Naive thymus-derived CD4-positive, alpha-beta T cell (primary cell): ENCODE measurements at regions of chr17 and their contacts with region 1.

Region 1: DNA sequence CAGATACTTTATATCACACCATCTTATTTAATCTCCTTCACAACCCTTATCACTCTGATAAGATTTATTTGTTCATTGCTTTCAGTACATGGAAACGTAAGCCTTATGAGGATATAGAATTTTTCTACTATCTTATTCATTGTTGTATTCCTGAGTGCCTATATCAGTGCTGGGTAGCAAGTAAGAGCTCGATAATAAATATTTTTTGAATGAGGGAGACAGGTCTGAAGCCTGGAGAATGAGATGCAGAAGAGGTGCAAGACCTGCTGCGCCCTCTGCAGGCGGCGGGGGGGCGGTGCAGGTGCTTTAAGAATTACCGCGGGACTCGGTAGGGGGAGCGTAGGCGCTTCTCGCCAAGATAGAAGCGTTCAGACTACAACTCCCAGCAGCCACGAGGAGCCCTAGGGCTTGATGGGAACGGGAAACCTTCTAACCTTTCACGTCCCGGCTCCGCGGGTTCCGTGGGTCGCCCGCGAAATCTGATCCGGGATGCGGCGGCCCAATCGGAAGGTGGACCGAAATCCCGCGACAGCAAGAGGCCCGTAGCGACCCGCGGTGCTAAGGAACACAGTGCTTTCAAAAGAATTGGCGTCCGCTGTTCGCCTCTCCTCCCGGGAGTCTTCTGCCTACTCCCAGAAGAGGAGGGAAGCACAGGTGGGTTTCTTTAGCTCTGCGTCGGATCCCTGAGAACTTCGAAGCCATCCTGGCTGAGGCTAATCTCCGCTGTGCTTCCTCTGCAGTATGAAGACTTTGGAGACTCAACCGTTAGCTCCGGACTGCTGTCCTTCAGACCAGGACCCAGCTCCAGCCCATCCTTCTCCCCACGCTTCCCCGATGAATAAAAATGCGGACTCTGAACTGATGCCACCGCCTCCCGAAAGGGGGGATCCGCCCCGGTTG is at the start of gene WRAP53:
- DNase-seq: peak; percentile 93 to 97 (median 96)
- ATAC-seq: peak; percentile 89
- H3K4me3 ChIP-seq: peak within 1 kb of the TSS; percentile 96
- H3K4me3 Mint-ChIP-seq: peak within 1 kb of the TSS; percentile 95 to 99 (median 97)
- H3K27ac ChIP-seq: peak within 1 kb of the TSS; percentile 96
- H3K27ac Mint-ChIP-seq: peak within 1 kb of the TSS; percentile 99 to 100 (median 100)
- H3K4me1 ChIP-seq: peaks cover 28 to 31% of the 10 kb centered on the region in 2 donors
- H3K4me1 Mint-ChIP-seq: peaks cover 31 to 47% (median 41%) of the 10 kb centered on the region in 7 donors
- H3K27me3 ChIP-seq: no peaks in the 10 kb centered on the region
- H3K27me3 Mint-ChIP-seq: no peaks in the 10 kb centered on the region
- total RNA-seq, gene WRAP53: 6.7 to 21.1 (median 9.6) TPM

Region 2: DNA sequence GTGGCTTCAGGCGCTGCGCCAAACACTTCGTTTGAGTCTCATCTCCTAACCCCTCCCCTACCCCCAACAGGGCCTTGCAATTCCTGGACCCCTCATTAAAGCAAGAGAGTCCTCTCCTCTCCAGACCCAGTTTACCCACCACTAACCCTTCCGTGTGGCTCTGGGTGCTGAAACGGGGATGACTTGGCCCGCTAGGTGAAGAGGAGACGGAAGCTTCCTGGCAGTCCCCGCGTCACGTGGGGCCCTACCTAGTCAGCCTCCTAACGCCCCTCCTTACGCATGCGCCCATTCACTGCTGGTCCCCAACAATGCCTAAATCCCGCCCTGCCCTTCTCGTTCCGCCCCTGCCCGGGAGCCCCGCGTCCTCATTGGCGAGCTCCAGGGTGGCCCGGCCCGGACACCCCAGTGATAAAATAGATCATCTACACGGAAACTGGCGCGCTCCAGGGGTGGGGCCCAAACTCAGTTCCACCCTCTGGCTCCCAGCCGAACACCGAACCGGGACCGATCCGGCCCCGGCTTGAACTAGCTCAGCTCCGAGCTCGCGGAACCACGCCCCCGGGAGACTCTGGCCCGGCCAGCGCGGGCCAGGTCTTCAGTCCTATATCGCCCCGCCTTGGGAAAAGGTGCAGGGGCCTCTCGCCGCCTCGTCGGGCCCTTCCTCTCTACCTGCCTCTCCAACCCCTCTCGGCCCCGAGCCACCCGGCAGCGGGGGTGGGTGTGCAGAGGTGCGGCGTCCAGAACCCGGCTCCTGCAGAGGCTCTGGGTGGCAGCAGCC is 652.4 kb before region 1 on chr17 and contains the start of gene SLC16A13:
- CTCF ChIA-PET with region 1: no interaction called
- POLR2A ChIA-PET with region 1: interaction called, 8 read pairs
- intact Hi-C with region 1: loop called in 1 of 2 experiments (anchors 5 kb)
- DNase-seq: peak; percentile 87 to 99 (median 97)
- ATAC-seq: peak; percentile 95
- H3K4me3 ChIP-seq: peak within 1 kb of the TSS; percentile 67
- H3K4me3 Mint-ChIP-seq: peak within 1 kb of the TSS; percentile 89 to 95 (median 93)
- H3K27ac ChIP-seq: peak within 1 kb of the TSS; percentile 94
- H3K27ac Mint-ChIP-seq: peak within 1 kb of the TSS; percentile 96 to 99 (median 98)
- H3K4me1 ChIP-seq: peaks cover 26 to 36% of the 10 kb centered on the region in 2 donors
- H3K4me1 Mint-ChIP-seq: peaks cover 39 to 80% (median 58%) of the 10 kb centered on the region in 7 donors
- H3K27me3 ChIP-seq: no peaks in the 10 kb centered on the region
- H3K27me3 Mint-ChIP-seq: no peaks in the 10 kb centered on the region
- total RNA-seq, gene SLC16A13: 3.4 to 20.9 (median 15.0) TPM

Region 3: GRCh38 chr17:7329374-7329996 is 358.7 kb before region 1 on chr17:
- CTCF ChIA-PET with region 1: no interaction called
- POLR2A ChIA-PET with region 1: interaction called, 6 read pairs
- intact Hi-C with region 1: loop called in 1 of 2 experiments (anchors 5 kb)
- DNase-seq: peak; percentile 84 to 98 (median 98)
- ATAC-seq: peak; percentile 91
- H3K4me3 ChIP-seq: peak overlapping the region; percentile 95
- H3K4me3 Mint-ChIP-seq: peak overlapping the region; percentile 89 to 100 (median 96)
- H3K27ac ChIP-seq: peak overlapping the region; percentile 88
- H3K27ac Mint-ChIP-seq: peak overlapping the region; percentile 93 to 99 (median 97)
- H3K4me1 ChIP-seq: peaks cover 15 to 36% of the 10 kb centered on the region in 2 donors
- H3K4me1 Mint-ChIP-seq: peaks cover 29 to 61% (median 44%) of the 10 kb centered on the region in 7 donors
- H3K27me3 ChIP-seq: no peaks in the 10 kb centered on the region
- H3K27me3 Mint-ChIP-seq: no peaks in the 10 kb centered on the region

Region 4: DNA sequence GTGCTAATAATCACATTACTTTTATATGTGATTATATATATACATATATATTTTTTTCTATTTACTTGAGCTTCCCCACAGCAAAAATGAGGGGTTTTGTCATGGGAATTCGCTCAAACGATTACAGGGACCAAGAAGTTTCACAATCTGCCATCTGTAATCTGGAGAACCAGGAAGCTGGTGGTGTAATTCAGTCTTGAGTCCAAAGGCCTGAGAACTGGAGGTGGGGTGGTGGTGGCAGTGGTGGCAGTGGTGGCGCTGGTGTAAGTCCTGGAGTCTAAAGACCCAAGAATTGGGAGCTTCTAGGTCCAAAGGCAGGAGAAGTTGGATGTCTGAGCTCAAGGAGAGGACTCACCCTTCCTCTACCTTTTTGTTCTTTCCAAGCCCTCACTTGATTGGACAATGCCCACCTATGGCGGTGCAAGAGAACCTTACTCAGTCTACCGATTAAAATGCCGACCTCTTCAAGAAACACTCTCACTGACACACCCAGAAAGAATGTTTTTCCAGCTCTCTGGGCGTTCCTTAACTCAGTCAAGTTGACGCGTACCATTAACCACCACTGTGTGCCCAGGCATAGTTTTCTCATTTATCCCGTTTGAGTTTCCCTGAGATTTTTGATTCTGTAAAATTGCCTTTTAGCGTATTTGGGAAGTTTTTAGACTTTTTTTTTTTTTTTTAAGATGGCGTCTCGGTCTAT is 172.1 kb before region 1 on chr17:
- CTCF ChIA-PET with region 1: interaction called, 22 read pairs
- POLR2A ChIA-PET with region 1: interaction called, 5 read pairs
- intact Hi-C with region 1: loop called in 1 of 2 experiments (anchors 1 kb)
- DNase-seq: no peak
- ATAC-seq: no peak
- H3K4me3 ChIP-seq: no peak overlapping the region
- H3K4me3 Mint-ChIP-seq: no peak overlapping the region
- H3K27ac ChIP-seq: no peak overlapping the region
- H3K27ac Mint-ChIP-seq: peak overlapping the region in 3 of 9 donors; percentile 12 to 74 (median 45)
- H3K4me1 ChIP-seq: no peaks in the 10 kb centered on the region
- H3K4me1 Mint-ChIP-seq: peaks cover 0 to 7% (median 0%) of the 10 kb centered on the region in 7 donors
- H3K27me3 ChIP-seq: no peaks in the 10 kb centered on the region
- H3K27me3 Mint-ChIP-seq: no peaks in the 10 kb centered on the region

Region 5: DNA sequence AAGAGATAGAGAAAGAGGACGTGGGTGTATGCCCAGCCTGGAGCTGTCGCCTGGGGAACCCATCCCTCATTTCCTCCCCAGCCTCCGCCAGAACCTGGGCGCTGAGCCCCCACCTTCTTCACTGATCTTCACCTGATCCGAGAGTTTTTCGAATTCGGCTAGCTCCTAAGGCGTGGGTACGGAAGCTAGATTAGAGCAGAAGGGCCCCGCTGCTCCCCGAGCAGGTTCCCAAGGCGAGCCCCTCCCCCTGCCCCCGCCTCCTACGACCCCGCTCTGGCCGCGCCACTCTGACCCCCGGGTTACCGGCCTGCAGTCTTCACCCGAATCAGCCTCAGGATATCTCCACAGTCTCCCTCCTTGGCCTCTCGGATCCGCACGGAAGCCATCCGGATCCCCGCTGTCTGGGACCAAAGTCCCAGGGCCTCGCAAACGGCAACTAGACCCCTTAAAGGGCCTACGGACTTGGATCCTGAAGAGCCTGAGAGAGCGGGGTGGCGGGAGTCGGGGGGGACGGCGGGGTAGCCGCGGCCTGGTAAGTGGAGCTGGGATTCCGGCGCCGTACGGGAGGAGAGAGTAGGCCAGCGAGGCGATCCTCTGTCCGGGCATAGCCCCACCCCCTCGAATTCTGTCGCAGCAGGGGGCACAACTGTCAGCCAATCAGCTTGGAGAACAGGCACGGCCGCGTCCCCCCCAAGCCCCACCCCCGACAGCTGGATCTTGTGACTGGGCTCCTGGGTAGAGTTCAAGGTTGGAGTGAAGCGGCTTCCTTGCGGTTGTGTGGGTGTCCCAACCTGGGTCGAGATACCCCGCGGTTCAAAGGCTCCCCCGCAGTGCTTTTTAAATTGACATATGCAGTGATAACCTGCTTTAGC is 60.7 kb before region 1 on chr17 and contains the start of gene SAT2:
- CTCF ChIA-PET with region 1: interaction called, 25 read pairs
- POLR2A ChIA-PET with region 1: interaction called, 76 read pairs
- intact Hi-C with region 1: loop called (anchors 1 kb)
- DNase-seq: peak; percentile 47 to 87 (median 72)
- ATAC-seq: peak; percentile 97
- H3K4me3 ChIP-seq: peak within 1 kb of the TSS; percentile 79
- H3K4me3 Mint-ChIP-seq: peak within 1 kb of the TSS; percentile 90 to 96 (median 94)
- H3K27ac ChIP-seq: peak within 1 kb of the TSS; percentile 93
- H3K27ac Mint-ChIP-seq: peak within 1 kb of the TSS; percentile 75 to 95 (median 87)
- H3K4me1 ChIP-seq: peaks cover 5% of the 10 kb centered on the region in 2 donors
- H3K4me1 Mint-ChIP-seq: peaks cover 7 to 19% (median 17%) of the 10 kb centered on the region in 7 donors
- H3K27me3 ChIP-seq: no peaks in the 10 kb centered on the region
- H3K27me3 Mint-ChIP-seq: no peaks in the 10 kb centered on the region
- total RNA-seq, gene SAT2: 26.5 to 95.0 (median 77.2) TPM

Region 6: GRCh38 chr17:7745748-7746470 is 57.8 kb after region 1 on chr17:
- CTCF ChIA-PET with region 1: no interaction called
- POLR2A ChIA-PET with region 1: no interaction called
- intact Hi-C with region 1: no loop called
- DNase-seq: no peak
- ATAC-seq: no peak
- H3K4me3 ChIP-seq: no peak overlapping the region
- H3K4me3 Mint-ChIP-seq: no peak overlapping the region
- H3K27ac ChIP-seq: no peak overlapping the region
- H3K27ac Mint-ChIP-seq: no peak overlapping the region
- H3K4me1 ChIP-seq: no peaks in the 10 kb centered on the region
- H3K4me1 Mint-ChIP-seq: peaks cover 0 to 2% (median 0%) of the 10 kb centered on the region in 7 donors
- H3K27me3 ChIP-seq: no peaks in the 10 kb centered on the region
- H3K27me3 Mint-ChIP-seq: peaks cover 2 to 18% (median 10%) of the 10 kb centered on the region in 5 donors

Region 7: GRCh38 chr17:7834962-7835813 is 147.0 kb after region 1 on chr17:
- CTCF ChIA-PET with region 1: interaction called, 3 read pairs
- POLR2A ChIA-PET with region 1: interaction called, 19 read pairs
- intact Hi-C with region 1: no loop called
- DNase-seq: peak; percentile 76 to 97 (median 95)
- ATAC-seq: peak; percentile 70
- H3K4me3 ChIP-seq: peak overlapping the region; percentile 96
- H3K4me3 Mint-ChIP-seq: peak overlapping the region; percentile 91 to 99 (median 96)
- H3K27ac ChIP-seq: peak overlapping the region; percentile 96
- H3K27ac Mint-ChIP-seq: peak overlapping the region; percentile 95 to 100 (median 99)
- H3K4me1 ChIP-seq: peaks cover 29 to 38% of the 10 kb centered on the region in 2 donors
- H3K4me1 Mint-ChIP-seq: peaks cover 28 to 60% (median 44%) of the 10 kb centered on the region in 7 donors
- H3K27me3 ChIP-seq: no peaks in the 10 kb centered on the region
- H3K27me3 Mint-ChIP-seq: peaks cover 0 to 28% (median 0%) of the 10 kb centered on the region in 5 donors

Region 8: GRCh38 chr17:8156246-8156992 is 468.3 kb after region 1 on chr17:
- CTCF ChIA-PET with region 1: no interaction called
- POLR2A ChIA-PET with region 1: interaction called, 9 read pairs
- intact Hi-C with region 1: loop called (anchors 2 kb)
- DNase-seq: peak; percentile 96 to 100 (median 100)
- ATAC-seq: peak; percentile 83
- H3K4me3 ChIP-seq: peak overlapping the region; percentile 93
- H3K4me3 Mint-ChIP-seq: no peak overlapping the region
- H3K27ac ChIP-seq: peak overlapping the region; percentile 97
- H3K27ac Mint-ChIP-seq: no peak overlapping the region
- H3K4me1 ChIP-seq: peaks cover 58 to 75% of the 10 kb centered on the region in 2 donors
- H3K4me1 Mint-ChIP-seq: peaks cover 33 to 73% (median 65%) of the 10 kb centered on the region in 7 donors
- H3K27me3 ChIP-seq: no peaks in the 10 kb centered on the region
- H3K27me3 Mint-ChIP-seq: no peaks in the 10 kb centered on the region

Region 9: GRCh38 chr17:8470447-8471047 is 782.4 kb after region 1 on chr17:
- CTCF ChIA-PET with region 1: no interaction called
- POLR2A ChIA-PET with region 1: no interaction called
- intact Hi-C with region 1: no loop called
- DNase-seq: no peak
- ATAC-seq: no peak
- H3K4me3 ChIP-seq: no peak overlapping the region
- H3K4me3 Mint-ChIP-seq: no peak overlapping the region
- H3K27ac ChIP-seq: no peak overlapping the region
- H3K27ac Mint-ChIP-seq: no peak overlapping the region
- H3K4me1 ChIP-seq: no peaks in the 10 kb centered on the region
- H3K4me1 Mint-ChIP-seq: peaks cover 0 to 15% (median 0%) of the 10 kb centered on the region in 7 donors
- H3K27me3 ChIP-seq: no peaks in the 10 kb centered on the region
- H3K27me3 Mint-ChIP-seq: no peaks in the 10 kb centered on the region